Gastrocnemius medialis (tissue), 4 donors: ENCODE measurements at regions of chr5 and their contacts with region 1.

Region 1: DNA sequence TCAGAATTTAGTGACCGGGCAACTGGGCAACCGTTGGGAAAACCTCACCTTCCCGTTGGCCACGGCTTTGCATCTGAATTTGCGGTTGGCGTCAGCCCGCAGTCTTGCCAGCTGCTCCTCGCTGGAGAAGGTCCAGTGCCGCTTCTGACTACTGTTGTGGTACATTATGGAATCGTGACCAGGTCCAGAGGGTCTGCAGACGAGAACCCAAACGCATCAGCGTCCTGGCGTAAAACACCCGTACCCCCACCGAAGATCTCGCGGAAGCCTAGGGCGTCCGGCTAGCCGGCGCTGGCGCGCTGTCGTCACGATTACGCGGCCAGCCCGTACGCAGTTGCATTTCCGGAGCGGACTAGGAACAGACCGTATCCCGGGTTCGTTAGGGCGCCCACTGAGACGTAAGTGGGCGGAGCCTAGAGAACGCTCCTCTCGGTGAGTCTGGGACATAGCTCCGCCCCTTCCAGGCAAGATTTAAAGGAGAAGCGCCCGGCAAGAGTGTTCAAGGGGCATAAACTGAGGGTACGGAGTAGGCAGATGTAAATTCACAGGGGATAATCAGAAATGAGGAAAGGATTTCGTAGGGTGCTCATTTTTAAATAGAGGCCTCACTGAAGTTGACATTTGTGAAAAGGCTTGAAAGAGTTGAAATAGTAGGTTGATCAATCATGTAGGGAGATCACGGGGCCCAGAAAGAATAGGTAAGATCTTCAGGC is at the start of gene CCNH:
- DNase-seq: peak; percentile 97 to 99
- ATAC-seq: peak; percentile 95 to 97
- H3K4me3 ChIP-seq: peak within 1 kb of the TSS; percentile 72 to 92 (median 82)
- H3K27ac ChIP-seq: peak within 1 kb of the TSS; percentile 92 to 99 (median 94)
- H3K4me1 ChIP-seq: peaks cover 11 to 21% of the 10 kb centered on the region in 2 donors
- H3K27me3 ChIP-seq: no peaks in the 10 kb centered on the region
- CTCF ChIP-seq: no peak
- POLR2A ChIP-seq: peak; percentile 92 to 93
- total RNA-seq, gene CCNH: 48.1 to 77.4 (median 57.2) TPM

Region 2: GRCh38 chr5:86617756-86618576 is 794.8 kb before region 1 on chr5 and contains the start of gene COX7C:
- in situ Hi-C with region 1: loop called (anchors 25 kb)
- intact Hi-C with region 1: loop called (anchors 2 kb)
- DNase-seq: peak; percentile 92 to 93
- ATAC-seq: peak; percentile 99 to 100
- H3K4me3 ChIP-seq: peak within 1 kb of the TSS; percentile 81 to 99 (median 92)
- H3K27ac ChIP-seq: peak within 1 kb of the TSS; percentile 88 to 96 (median 92)
- H3K4me1 ChIP-seq: peaks cover 13 to 14% of the 10 kb centered on the region in 2 donors
- H3K27me3 ChIP-seq: no peaks in the 10 kb centered on the region
- CTCF ChIP-seq: no peak
- POLR2A ChIP-seq: peak; percentile 73 to 82
- total RNA-seq, gene COX7C: 728 to 902 (median 817) TPM

Region 3: DNA sequence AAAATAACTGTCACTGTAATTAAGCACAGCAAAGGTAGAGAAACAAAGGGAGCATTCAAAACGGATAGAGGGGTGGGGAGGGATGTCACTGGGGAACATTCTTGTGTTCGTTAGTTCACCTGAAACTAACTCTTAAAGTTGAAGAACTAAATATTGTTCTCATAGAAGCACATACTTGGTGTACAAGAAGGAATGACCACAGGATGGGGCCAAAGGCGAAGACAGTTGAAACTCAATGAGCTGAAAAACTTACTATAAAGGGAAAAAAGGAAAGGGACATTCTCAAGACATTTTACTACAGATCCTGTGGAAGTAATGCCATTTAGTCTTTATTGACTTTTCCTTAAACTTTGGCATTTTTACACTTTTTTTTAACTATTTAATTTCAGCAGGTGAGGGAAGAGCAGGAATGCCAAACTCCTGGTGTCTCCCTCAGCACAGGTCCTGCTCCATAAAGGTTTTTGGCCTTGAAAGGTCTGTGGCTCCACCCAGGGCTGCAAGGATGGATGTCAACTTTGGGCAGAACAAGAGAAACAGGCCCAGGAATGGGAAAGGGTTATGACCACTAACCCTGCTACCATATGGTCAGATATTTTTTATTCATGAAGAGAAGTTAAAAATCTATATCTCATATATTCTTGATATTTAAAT is 342.7 kb before region 1 on chr5:
- in situ Hi-C with region 1: loop called in 1 of 4 experiments (anchors 25 kb)
- intact Hi-C with region 1: no loop called
- DNase-seq: no peak
- ATAC-seq: no peak
- H3K4me3 ChIP-seq: no peak overlapping the region
- H3K27ac ChIP-seq: no peak overlapping the region
- H3K4me1 ChIP-seq: no peaks in the 10 kb centered on the region
- H3K27me3 ChIP-seq: no peaks in the 10 kb centered on the region
- CTCF ChIP-seq: no peak
- POLR2A ChIP-seq: no peak

Region 4: DNA sequence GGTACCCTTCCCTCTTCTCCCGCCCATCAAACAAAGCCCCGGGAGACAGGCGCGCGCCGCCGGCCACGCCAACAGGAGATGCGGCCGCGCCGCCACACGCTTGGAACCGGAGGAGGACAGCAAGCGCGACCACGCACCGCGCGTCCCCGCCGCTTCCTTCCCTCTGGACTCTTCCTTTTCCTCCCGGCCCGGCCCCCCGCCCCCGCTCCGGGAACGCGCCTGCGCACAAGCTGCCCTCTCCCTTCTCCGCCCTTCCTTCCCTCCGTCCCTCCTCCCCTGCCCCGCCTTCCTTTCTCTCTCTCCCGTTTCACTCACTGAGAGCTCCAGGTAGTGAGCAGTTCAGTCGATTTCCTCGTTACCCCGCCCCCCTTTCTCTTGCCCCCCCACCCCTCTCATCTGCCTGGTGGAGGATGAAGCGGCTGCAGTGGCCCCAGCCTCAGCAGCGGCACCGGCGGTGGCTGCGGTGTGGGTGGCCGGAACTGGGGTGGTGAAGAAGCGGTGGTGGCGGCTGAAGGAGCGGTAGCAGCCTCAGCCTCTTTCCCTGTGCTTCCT is 145.1 kb before region 1 on chr5 and contains the start of gene RASA1:
- in situ Hi-C with region 1: loop called in 1 of 4 experiments (anchors 10 kb)
- intact Hi-C with region 1: loop called (anchors 2 kb)
- DNase-seq: peak; percentile 91 to 92
- ATAC-seq: peak; percentile 93 to 96
- H3K4me3 ChIP-seq: peak within 1 kb of the TSS; percentile 86 to 99 (median 94)
- H3K27ac ChIP-seq: peak within 1 kb of the TSS; percentile 84 to 93 (median 91)
- H3K4me1 ChIP-seq: peaks cover 14 to 15% of the 10 kb centered on the region in 2 donors
- H3K27me3 ChIP-seq: no peaks in the 10 kb centered on the region
- CTCF ChIP-seq: no peak
- POLR2A ChIP-seq: peak; percentile 77 to 78
- total RNA-seq, gene RASA1: 12.0 to 16.8 (median 12.2) TPM

Region 5: GRCh38 chr5:88690409-88691229 is 1277.8 kb after region 1 on chr5:
- in situ Hi-C with region 1: loop called in 1 of 4 experiments (anchors 25 kb)
- intact Hi-C with region 1: no loop called
- DNase-seq: peak; percentile 38 to 52
- ATAC-seq: peak; percentile 79 to 89
- H3K4me3 ChIP-seq: peak overlapping the region; percentile 14 to 43 (median 32)
- H3K27ac ChIP-seq: no peak overlapping the region
- H3K4me1 ChIP-seq: peaks cover 20% of the 10 kb centered on the region in 2 donors
- H3K27me3 ChIP-seq: peaks cover 98 to 100% (median 100%) of the 10 kb centered on the region in 3 donors
- CTCF ChIP-seq: peak; percentile 67 to 95 (median 87)
- POLR2A ChIP-seq: no peak